AG04450 (cell line): ENCODE measurements at regions of chr19 and their contacts with region 1.

Region 1: GRCh38 chr19:7919610-7920518 is at the start of gene SNAPC2:
- DNase-seq: peak; percentile 88
- H3K4me3 ChIP-seq: peak within 1 kb of the TSS; percentile 70
- H3K27ac ChIP-seq: peak within 1 kb of the TSS; percentile 75
- H3K27me3 ChIP-seq: peaks cover 7% of the 10 kb centered on the region
- CTCF ChIP-seq: no peak
- polyA plus RNA-seq, gene SNAPC2: 12.1 and 17.7 TPM in 2 replicates

Region 2: DNA sequence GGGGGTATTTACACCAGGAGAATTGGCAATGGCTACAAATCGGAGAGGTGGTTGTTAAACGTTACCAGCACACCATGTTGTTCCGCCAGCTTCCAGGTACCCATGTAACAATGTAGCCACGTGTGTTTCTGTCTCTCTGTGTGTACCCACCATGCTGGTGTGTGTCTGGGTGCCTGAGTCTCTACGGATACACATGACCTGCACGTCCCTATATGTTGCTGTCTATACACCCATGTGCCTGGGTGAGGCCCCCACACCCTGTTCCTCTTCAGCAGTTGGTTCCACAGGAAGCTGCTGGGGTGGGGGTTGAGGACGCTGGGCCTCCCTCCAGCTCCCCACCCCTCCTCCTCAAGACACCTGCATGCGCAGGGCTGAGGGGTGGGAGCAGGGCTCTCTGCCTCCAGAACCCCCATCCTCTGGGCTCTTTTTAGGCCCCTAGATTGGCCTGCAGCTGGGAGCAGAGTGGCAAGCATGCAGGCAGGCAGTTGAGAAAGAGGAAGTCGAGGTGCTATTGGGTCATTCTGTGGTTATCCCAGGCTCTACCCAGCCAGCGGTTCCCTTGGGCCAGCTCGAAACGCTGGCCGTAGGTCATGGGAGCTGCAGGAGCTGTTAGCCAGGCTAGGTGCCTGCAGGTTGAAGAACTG is 571.2 kb before region 1 on chr19 and contains the start of gene ARHGEF18:
- CTCF ChIA-PET with region 1: interaction called, 10 read pairs
- POLR2A ChIA-PET with region 1: no interaction called
- DNase-seq: no peak
- H3K4me3 ChIP-seq: no peak within 1 kb of the TSS
- H3K27ac ChIP-seq: no peak within 1 kb of the TSS
- H3K27me3 ChIP-seq: no peaks in the 10 kb centered on the region
- CTCF ChIP-seq: no peak
- polyA plus RNA-seq, gene ARHGEF18: 4.9 and 6.0 TPM in 2 replicates

Region 3: GRCh38 chr19:7799640-7800355 is 120.1 kb before region 1 on chr19:
- CTCF ChIA-PET with region 1: no interaction called
- POLR2A ChIA-PET with region 1: no interaction called
- DNase-seq: peak; percentile 55
- H3K4me3 ChIP-seq: peak overlapping the region; percentile 51
- H3K27ac ChIP-seq: no peak overlapping the region
- H3K27me3 ChIP-seq: peaks cover 2% of the 10 kb centered on the region
- CTCF ChIP-seq: peak; percentile 62

Region 4: DNA sequence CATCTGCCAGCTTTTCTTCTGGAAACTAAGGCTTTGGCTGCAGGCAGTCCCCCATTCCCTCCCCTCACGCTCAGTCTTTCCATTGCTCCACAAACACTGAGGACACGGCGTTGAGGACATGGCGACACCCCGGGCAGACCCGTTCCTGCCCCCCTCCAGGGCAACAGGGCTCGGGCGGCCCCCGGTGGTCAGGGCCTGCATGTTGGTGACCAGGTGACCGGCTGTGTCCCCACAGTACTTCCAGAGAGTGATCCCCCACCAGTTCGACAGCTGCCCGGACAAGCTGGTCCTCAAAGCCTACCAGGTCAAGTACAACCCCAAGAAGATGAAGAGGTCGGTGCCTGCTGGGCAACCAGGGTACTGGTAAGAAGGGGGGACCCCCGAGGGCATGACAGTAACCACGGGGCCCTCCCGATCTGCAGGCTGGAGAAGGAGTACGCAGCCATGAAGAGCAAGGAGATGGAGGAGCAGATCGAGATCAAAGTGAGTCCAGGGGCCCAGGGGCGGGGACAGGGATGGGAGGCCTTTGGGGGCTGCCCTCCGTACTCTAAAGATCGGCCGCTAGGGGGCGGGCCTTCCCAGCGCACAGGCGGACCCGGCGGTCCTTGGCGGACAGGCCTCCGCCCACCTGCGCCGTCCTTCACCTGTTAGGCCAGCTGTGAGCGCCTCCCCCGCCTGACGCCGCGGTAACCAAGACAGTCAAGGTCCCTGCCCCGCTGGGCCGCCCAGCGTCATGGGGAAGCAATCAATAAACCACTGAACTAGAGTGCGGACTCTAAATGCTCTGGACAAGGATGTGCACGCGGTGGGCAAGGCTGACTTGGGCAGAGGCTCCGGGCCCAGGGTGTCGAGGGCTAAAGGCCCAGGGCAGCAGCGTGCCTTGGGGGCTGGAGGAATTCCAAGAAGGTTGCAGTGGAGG is 66.8 kb before region 1 on chr19:
- CTCF ChIA-PET with region 1: interaction called, 11 read pairs
- POLR2A ChIA-PET with region 1: no interaction called
- DNase-seq: no peak
- H3K4me3 ChIP-seq: no peak overlapping the region
- H3K27ac ChIP-seq: no peak overlapping the region
- H3K27me3 ChIP-seq: no peaks in the 10 kb centered on the region
- CTCF ChIP-seq: peak; percentile 80

Region 5: GRCh38 chr19:7903244-7904073 is 16.4 kb before region 1 on chr19 and contains the start of gene MAP2K7:
- CTCF ChIA-PET with region 1: interaction called, 5 read pairs
- POLR2A ChIA-PET with region 1: interaction called, 19 read pairs
- DNase-seq: peak; percentile 98
- H3K4me3 ChIP-seq: peak within 1 kb of the TSS; percentile 83
- H3K27ac ChIP-seq: peak within 1 kb of the TSS; percentile 61
- H3K27me3 ChIP-seq: no peaks in the 10 kb centered on the region
- CTCF ChIP-seq: peak; percentile 43
- polyA plus RNA-seq, gene MAP2K7: 5.6 and 6.2 TPM in 2 replicates

Region 6: DNA sequence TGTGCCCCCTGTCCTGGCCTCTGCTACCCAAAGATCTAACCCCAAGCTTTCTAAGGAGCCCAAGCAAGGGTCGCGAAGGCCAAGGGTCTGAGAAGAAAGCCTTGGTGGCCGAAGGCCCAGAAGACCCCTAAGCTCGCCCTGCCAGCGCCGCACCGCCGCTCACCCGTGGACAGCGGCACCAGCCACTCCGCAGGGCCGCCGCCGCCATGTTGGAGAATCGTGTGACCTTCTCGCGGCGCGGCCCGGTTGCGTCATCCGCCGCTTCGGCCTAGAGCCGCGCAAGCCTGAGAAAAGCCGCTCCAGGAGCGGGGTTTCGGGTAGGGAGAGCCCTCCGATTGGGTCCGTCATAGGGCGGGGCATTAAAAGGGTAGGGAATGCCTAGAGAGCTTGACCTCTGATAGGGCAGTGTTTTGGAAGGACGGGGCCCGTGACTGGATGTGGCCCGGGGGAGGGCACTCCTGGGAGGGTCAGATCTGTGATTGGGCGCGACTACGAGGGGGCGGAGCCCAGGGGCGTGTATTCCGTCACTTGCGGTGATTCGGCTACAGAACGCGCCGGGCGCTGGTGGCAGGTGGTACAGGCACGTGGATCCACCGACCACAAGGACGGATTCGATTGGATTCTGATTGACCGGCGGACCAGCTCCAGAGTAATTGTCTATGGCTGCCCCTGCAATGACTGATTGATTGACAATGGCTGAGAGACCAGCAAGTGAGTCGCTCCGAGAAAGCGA is 23.7 kb after region 1 on chr19 and contains the start of gene TIMM44:
- CTCF ChIA-PET with region 1: interaction called, 15 read pairs
- POLR2A ChIA-PET with region 1: interaction called, 6 read pairs
- DNase-seq: peak; percentile 99
- H3K4me3 ChIP-seq: peak within 1 kb of the TSS; percentile 96
- H3K27ac ChIP-seq: peak within 1 kb of the TSS; percentile 93
- H3K27me3 ChIP-seq: no peaks in the 10 kb centered on the region
- CTCF ChIP-seq: no peak
- polyA plus RNA-seq, gene TIMM44: 42.0 and 43.3 TPM in 2 replicates

Region 7: GRCh38 chr19:8601786-8602185 is 681.9 kb after region 1 on chr19:
- CTCF ChIA-PET with region 1: no interaction called
- POLR2A ChIA-PET with region 1: interaction called, 13 read pairs
- DNase-seq: no peak
- H3K4me3 ChIP-seq: no peak overlapping the region
- H3K27ac ChIP-seq: no peak overlapping the region
- H3K27me3 ChIP-seq: no peaks in the 10 kb centered on the region
- CTCF ChIP-seq: no peak